Activated CD8-positive, alpha-beta T cell treated with anti-CD3 and anti-CD28 coated beads, Interleukin-2, amount 10 ng/mL, durations not matched to agents 7 days and 5 days (primary cell): ENCODE measurements at regions of chr20 and their contacts with region 1.

Region 1: GRCh38 chr20:59207742-59208357 is 44.2 kb downstream of the ZNF831 start:
- DNase-seq: peak; percentile 86
- ATAC-seq: peak; percentile 96
- H3K4me3 Mint-ChIP-seq: no peak overlapping the region
- H3K27ac Mint-ChIP-seq: peak overlapping the region; percentile 61
- H3K4me1 Mint-ChIP-seq: peaks cover 17% of the 10 kb centered on the region
- H3K27me3 Mint-ChIP-seq: no peaks in the 10 kb centered on the region

Region 2: DNA sequence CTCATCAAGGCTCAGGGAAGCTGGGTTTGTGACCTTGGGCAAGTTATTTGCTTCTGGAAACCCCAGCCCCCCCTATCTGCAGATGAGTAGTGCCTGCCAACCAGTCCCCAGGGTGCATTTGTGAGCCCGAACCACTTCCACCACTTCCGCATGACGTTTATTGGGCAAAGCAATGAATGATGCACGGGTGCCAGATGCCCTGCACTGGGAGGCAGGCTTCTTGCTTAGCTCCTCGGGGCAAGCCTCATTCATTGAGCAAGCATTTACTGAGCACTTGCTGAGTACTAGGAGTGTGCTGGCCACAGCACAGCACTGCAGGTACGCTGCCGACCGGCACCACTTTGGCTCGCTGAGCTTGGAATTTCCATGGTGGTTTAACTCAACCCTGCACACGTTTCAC is 417.4 kb before region 1 on chr20:
- CTCF ChIA-PET with region 1: no interaction called
- POLR2A ChIA-PET with region 1: no interaction called
- DNase-seq: no peak
- ATAC-seq: no peak
- H3K4me3 Mint-ChIP-seq: no peak overlapping the region
- H3K27ac Mint-ChIP-seq: no peak overlapping the region
- H3K4me1 Mint-ChIP-seq: no peaks in the 10 kb centered on the region
- H3K27me3 Mint-ChIP-seq: peaks cover 15% of the 10 kb centered on the region

Region 3: GRCh38 chr20:59055295-59055694 is 152.6 kb before region 1 on chr20:
- CTCF ChIA-PET with region 1: interaction called, 13 read pairs
- POLR2A ChIA-PET with region 1: no interaction called
- DNase-seq: no peak
- ATAC-seq: no peak
- H3K4me3 Mint-ChIP-seq: no peak overlapping the region
- H3K27ac Mint-ChIP-seq: no peak overlapping the region
- H3K4me1 Mint-ChIP-seq: no peaks in the 10 kb centered on the region
- H3K27me3 Mint-ChIP-seq: peaks cover 28% of the 10 kb centered on the region

Region 4: GRCh38 chr20:59082077-59082740 is 125.6 kb before region 1 on chr20:
- CTCF ChIA-PET with region 1: interaction called, 177 read pairs
- POLR2A ChIA-PET with region 1: interaction called, 5 read pairs
- DNase-seq: no peak
- ATAC-seq: no peak
- H3K4me3 Mint-ChIP-seq: no peak overlapping the region
- H3K27ac Mint-ChIP-seq: no peak overlapping the region
- H3K4me1 Mint-ChIP-seq: peaks cover 14% of the 10 kb centered on the region
- H3K27me3 Mint-ChIP-seq: peaks cover 17% of the 10 kb centered on the region

Region 5: DNA sequence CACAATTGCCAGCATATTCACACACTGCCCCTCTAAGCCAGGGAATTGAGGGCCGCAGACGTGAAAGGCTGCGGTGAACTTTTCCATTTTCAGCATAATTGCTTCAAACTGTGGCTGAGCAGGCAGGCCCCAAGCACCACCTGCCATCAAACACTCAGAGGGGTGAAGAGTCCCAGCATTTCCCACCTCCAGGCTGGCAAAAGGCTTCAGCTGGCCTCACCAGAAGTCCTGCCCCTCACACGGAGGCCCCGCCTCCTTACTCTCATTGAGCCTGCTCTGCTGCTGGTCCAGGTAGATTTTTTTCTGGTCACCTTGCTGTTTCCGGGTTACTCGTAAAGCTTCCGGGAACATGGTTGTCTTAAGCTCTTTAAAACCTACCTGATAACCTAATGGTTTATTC is 113.3 kb before region 1 on chr20:
- CTCF ChIA-PET with region 1: interaction called, 177 read pairs
- POLR2A ChIA-PET with region 1: no interaction called
- DNase-seq: no peak
- ATAC-seq: no peak
- H3K4me3 Mint-ChIP-seq: no peak overlapping the region
- H3K27ac Mint-ChIP-seq: no peak overlapping the region
- H3K4me1 Mint-ChIP-seq: no peaks in the 10 kb centered on the region
- H3K27me3 Mint-ChIP-seq: peaks cover 2% of the 10 kb centered on the region

Region 6: GRCh38 chr20:59120491-59120890 is 87.4 kb before region 1 on chr20:
- CTCF ChIA-PET with region 1: interaction called, 37 read pairs
- POLR2A ChIA-PET with region 1: no interaction called
- DNase-seq: peak; percentile 53
- ATAC-seq: peak; percentile 40
- H3K4me3 Mint-ChIP-seq: peak overlapping the region; percentile 3
- H3K27ac Mint-ChIP-seq: peak overlapping the region; percentile 0
- H3K4me1 Mint-ChIP-seq: peaks cover 73% of the 10 kb centered on the region
- H3K27me3 Mint-ChIP-seq: peaks cover 4% of the 10 kb centered on the region

Region 7: DNA sequence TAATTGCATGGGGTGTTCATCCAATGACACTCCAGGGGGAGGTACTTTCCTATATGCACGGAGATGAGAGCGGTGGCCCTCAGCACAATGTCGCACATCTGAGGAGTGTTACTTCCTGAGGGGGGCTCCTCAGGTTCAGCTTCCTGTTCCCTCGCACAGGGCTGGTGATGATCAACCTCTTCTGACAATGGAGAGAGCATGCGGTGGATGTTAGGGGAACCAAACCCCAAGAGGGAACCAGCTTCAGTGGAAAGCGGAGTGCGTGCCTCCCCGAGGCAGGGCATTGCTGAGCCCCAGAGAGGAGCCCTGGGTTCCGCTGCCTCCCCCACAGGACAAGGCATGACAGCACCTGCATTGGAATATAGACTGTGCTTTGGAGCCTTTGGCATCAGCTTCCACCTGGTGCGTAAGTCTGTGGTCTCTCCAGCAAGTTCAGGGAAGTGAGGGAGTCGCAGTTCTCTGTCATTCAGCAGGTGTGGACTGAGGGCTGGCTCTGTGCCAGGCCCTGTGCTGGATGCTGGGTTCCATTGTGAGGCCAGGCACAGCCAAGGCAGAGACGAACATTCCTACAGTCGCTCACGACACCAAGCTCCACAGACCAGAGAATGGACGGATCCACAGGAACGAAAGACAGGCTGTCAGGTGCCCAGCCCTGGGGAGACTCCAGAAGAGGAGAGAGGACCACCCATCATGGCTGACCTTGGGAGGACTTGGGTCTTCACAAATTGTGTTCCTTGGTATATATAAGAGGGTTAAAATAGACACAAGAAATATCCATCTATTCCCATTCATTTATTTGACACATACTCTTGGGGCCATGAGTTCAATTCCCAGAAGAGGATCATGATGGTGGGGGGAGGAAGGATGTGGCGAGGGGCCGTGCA is 48.1 kb before region 1 on chr20:
- CTCF ChIA-PET with region 1: interaction called, 27 read pairs
- POLR2A ChIA-PET with region 1: interaction called, 4 read pairs
- DNase-seq: peak; percentile 82
- ATAC-seq: peak; percentile 74
- H3K4me3 Mint-ChIP-seq: peak overlapping the region; percentile 89
- H3K27ac Mint-ChIP-seq: peak overlapping the region; percentile 97
- H3K4me1 Mint-ChIP-seq: peaks cover 67% of the 10 kb centered on the region
- H3K27me3 Mint-ChIP-seq: no peaks in the 10 kb centered on the region

Region 8: DNA sequence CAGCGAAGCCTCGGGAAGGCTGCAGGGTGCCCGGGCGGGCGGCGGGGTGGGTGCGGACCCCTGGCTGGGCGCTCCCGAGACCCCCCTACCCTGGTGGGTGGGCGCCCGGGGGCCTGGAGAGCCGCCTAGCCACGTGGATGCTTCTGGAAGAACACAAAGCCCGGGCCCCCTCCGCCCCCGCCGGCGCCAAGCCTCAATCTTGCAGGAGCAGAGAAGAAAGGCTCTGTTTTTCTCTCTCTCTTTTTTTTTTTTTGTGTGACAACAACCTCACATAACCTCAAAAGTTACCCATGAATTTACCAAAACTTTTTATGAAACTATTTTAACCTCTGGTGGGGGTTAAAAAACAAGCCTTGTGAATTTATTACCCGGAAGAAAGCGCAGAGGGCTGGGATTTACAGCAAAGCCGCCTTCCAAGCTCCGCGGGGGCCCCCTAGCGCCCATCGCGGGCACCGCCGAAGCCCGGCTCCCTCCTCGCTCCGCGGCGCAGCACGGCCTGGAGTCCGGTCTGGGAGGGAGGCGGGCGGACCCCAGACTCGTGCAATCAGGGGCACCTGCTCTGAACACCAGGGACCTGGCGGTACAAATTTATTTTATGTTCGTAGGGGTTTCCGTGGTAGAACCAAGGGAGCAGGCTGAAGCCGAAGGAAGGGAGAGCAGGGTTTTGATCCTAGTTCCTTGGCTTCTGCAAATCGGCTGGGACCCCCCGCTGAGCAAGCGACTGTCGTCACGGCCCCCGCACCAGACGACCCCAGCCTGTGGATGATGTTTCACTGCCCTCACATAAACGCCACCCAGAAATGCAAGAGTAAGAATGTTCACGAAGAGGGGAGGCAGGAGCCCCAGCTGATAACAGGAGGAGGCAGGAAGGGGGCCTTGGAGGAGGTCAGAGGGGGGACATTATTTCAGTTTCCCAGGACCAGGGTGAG is 14.7 kb after region 1 on chr20:
- CTCF ChIA-PET with region 1: interaction called, 26 read pairs
- POLR2A ChIA-PET with region 1: interaction called, 4 read pairs
- DNase-seq: peak; percentile 86
- ATAC-seq: peak; percentile 98
- H3K4me3 Mint-ChIP-seq: peak overlapping the region; percentile 73
- H3K27ac Mint-ChIP-seq: peak overlapping the region; percentile 61
- H3K4me1 Mint-ChIP-seq: peaks cover 17% of the 10 kb centered on the region
- H3K27me3 Mint-ChIP-seq: no peaks in the 10 kb centered on the region

Region 9: DNA sequence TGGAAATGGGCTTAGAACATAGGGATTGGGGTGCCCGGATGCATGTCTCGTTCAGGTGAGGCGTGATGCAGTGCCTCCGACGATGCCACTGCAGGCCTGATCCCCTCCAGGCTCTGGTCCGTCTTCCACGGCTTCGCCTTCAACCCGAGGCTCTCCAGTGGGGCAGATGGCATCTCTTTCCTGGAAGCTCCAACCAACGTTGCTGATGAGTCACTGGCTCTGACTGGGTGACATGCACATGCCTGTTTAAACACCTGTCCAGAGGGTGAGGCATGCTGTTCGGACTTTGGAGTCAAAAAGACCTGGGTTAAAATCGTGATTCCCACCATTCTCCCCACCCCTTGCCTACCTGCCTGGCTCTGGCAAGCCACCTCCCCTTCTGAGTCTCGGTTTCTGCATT is 83.9 kb after region 1 on chr20:
- CTCF ChIA-PET with region 1: no interaction called
- POLR2A ChIA-PET with region 1: no interaction called
- DNase-seq: no peak
- ATAC-seq: no peak
- H3K4me3 Mint-ChIP-seq: no peak overlapping the region
- H3K27ac Mint-ChIP-seq: no peak overlapping the region
- H3K4me1 Mint-ChIP-seq: peaks cover 11% of the 10 kb centered on the region
- H3K27me3 Mint-ChIP-seq: peaks cover 26% of the 10 kb centered on the region